ENCODE measurements at regions of chr7 and their contacts with region 1.

Region 1: DNA sequence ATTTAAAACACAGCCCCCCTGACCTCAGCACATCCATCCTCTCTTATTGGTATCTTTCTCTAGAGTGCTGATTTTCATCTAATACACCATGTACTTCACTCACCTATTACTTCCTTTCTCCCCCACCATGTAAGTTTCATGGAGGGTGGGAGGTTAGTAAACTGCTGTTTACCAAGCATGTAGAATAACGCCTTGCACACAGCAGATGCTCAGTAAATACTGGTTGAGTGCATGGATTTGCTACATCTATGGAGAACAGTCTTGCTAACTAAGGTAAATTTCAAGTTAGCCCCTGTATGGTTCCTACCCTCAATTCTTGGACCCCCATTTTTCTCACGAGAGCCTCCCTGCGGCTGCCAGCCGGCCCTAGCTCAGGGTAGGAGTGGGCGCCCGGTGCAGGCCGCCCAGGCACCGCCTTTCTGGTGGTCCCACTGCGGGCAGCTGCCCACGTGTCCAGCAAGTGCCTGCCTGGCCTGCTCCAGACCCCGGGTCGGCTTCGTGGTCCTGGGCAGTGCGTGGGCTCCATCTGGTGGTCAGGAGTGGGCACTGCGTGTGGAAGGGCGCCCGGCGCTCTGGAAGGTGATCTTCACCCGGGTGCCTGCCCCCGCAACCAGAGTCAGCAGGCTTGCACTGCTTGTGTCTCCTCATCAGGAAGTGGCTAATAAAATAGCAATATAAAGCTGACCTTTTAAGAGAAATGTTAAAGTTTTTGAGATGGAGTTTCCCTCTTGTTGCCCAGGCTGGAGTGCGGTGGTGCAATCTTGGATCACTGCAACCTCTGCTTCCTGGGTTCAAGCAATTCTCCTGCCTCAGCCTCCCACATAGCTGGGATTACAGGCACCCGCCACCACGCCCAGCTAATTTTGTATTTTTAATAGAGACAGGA is 63.4 kb upstream of the DNAJB6 start:
- DNase-seq: no peak
- H3K4me3 ChIP-seq: no peak overlapping the region
- H3K27ac ChIP-seq: no peak overlapping the region
- H3K4me1 ChIP-seq: peaks cover 30% of the 10 kb centered on the region
- H3K27me3 ChIP-seq: no peaks in the 10 kb centered on the region
- CTCF ChIP-seq: peak; percentile 89 to 98 (median 97)
- POLR2A ChIP-seq: no peak

Region 2: DNA sequence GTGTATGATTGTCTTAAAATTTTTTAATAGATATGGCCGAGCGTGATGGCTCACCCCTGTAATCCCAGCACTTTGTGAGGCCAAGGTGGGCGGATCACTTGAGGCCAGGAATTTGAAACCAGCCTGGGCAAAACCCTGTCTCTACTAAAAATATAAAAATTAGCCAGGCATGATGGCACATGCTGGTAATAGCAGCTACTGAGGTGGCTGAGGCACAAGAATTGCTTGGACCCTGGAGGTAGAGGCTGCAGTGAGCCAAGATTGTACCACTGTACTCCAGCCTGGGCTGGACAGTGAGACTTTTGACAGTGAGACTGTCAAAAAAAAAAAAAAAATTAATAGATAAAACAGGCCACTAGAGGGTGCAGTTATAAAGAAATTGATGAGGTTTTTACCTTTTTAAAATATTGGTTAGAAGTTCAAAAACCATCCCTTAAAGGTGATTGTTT is 303.5 kb before region 1 on chr7:
- intact Hi-C with region 1: loop called (anchors 10 kb)
- DNase-seq: no peak
- H3K4me3 ChIP-seq: no peak overlapping the region
- H3K27ac ChIP-seq: no peak overlapping the region
- H3K4me1 ChIP-seq: no peaks in the 10 kb centered on the region
- H3K27me3 ChIP-seq: no peaks in the 10 kb centered on the region
- CTCF ChIP-seq: peak in 2 of 3 experiments; percentile 22 to 25
- POLR2A ChIP-seq: no peak